ENCODE measurements at regions of chr2 and their contacts with region 1.

Region 1: DNA sequence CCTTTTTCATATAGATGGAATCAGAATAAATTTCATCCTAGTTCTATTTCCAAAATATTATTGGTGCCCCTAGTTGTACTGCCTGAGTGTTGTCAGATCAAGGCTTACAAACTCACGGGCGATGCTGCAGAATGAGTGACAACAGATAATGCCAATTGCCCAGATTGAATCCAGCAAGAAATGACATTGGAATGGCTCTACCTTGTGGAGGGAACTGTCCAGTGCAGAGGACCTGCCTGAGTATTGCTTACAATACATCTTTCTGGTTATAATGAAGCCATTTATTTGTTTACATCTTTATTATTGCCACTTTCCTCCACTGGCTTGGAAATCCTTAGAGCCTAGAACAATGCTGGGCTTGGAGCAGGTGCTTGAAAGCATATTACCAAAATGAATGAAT is 7.8 kb upstream of the IL1R2 start:
- DNase-seq: peak; percentile 61
- ATAC-seq: peak; percentile 44
- H3K4me3 ChIP-seq: 0 out of 2 replicates have a peak overlapping the region, but pooled peaks have one; percentile 12
- H3K27ac ChIP-seq: peak overlapping the region; percentile 98
- H3K4me1 ChIP-seq: peaks cover 47% of the 10 kb centered on the region
- H3K27me3 ChIP-seq: no peaks in the 10 kb centered on the region
- CTCF ChIP-seq: peak; percentile 70

Region 2: DNA sequence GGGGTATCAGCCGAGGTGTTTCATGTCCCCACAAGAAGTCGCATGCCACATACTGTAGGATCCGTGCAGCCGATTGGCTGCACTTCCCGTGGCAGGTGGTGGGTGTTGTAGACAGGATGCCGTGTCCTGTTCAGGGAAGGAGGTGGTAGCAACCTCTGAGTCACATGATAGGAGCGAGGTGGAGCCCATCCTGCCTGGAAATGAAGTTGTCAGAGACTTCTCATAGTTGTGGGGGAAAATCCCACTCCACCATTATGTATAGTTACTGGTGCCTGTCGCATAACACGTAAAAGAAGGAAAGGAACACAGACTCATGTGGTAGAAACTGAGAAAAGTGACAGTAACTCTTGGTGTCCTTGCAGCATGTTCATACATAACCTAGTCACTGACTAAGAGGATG is 83.6 kb before region 1 on chr2:
- CTCF ChIA-PET with region 1: no interaction called
- POLR2A ChIA-PET with region 1: interaction called, 3 read pairs
- intact Hi-C with region 1: loop called (anchors 5 kb)
- DNase-seq: peak; percentile 58
- ATAC-seq: peak; percentile 45
- H3K4me3 ChIP-seq: no peak overlapping the region
- H3K27ac ChIP-seq: peak overlapping the region; percentile 59
- H3K4me1 ChIP-seq: peaks cover 18% of the 10 kb centered on the region
- H3K27me3 ChIP-seq: no peaks in the 10 kb centered on the region
- CTCF ChIP-seq: no peak

Region 3: GRCh38 chr2:101998896-101999789 is 15.2 kb after region 1 on chr2:
- CTCF ChIA-PET with region 1: no interaction called
- POLR2A ChIA-PET with region 1: no interaction called
- intact Hi-C with region 1: loop called (anchors 1 kb)
- DNase-seq: peak; percentile 83
- ATAC-seq: peak; percentile 76
- H3K4me3 ChIP-seq: peak overlapping the region; percentile 19; the same call in 1 of the 2 replicates
- H3K27ac ChIP-seq: peak overlapping the region; percentile 92
- H3K4me1 ChIP-seq: peaks cover 38% of the 10 kb centered on the region
- H3K27me3 ChIP-seq: no peaks in the 10 kb centered on the region
- CTCF ChIP-seq: peak; percentile 33